ENCODE measurements at regions of chr7 and their contacts with region 1.

Region 1: DNA sequence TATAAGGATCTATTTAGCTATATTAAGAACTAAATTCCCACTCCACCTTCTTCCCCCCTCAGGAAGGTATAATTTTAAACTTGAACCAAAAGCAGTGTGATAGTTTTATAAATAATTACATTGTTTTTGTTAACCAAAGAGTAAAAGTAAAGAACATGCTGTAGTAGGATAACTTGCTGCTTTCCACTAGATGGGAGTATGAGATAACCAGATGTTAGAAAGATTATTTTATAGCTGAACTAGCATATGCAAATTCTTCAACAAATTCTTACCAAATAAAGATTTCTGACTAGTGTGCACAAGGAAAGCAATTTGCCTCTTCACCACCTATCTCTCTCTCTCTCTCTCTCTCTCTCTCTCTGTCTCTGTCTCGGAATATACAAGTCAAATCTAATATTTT is 31.8 kb downstream of the TES start:
- DNase-seq: no peak
- H3K4me3 ChIP-seq: no peak overlapping the region
- H3K27ac ChIP-seq: no peak overlapping the region
- H3K27me3 ChIP-seq: no peaks in the 10 kb centered on the region
- CTCF ChIP-seq: peak; percentile 44

Region 2: DNA sequence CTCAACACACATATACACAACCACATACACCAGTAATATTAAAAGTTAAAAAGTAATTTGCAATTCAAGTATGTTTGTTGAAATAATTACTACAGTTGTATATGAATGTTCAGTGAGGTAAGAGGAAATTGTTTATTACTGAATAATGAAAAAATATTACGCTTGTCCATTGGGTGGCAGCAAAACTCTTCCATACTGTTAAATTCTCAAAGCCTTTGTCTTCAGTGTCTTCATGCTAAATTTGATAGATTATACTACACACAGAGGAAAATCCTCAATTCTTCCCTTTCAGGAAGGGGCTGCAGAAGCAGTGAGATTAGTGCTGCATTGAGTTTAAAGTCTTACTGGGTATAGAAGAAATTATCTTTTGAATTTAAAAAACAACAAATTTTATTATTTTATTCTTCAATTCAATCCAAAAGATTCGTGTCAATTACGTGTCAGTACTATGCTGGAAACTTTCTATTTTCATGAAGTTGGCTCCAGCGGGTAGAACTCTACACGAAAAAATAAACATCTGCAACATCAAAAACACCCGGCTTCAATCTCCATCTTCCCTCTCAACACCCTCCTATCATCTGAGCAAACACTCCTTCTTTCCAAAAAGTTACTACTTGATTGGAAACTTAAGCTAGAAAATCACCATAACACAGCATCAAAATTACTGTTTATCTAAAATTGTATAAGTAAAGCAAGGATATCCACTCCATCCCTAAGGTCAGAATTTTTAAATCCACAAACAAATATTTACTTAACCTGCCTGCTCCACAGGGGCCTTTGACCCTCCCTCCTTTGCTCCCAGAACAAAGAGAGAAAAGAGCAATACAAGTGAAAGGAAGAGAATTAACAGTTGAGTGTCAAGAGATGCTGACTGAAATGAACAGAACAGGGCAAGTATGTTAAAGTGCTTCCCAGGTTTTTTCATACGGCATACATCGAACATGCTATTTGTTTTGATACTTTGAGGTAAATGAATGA is 68.8 kb before region 1 on chr7:
- CTCF ChIA-PET with region 1: interaction called, 362 read pairs
- POLR2A ChIA-PET with region 1: no interaction called
- DNase-seq: peak; percentile 52
- H3K4me3 ChIP-seq: no peak overlapping the region
- H3K27ac ChIP-seq: no peak overlapping the region
- H3K27me3 ChIP-seq: no peaks in the 10 kb centered on the region
- CTCF ChIP-seq: peak; percentile 54

Region 3: GRCh38 chr7:116219288-116219687 is 22.9 kb before region 1 on chr7:
- CTCF ChIA-PET with region 1: no interaction called
- POLR2A ChIA-PET with region 1: no interaction called
- DNase-seq: no peak
- H3K4me3 ChIP-seq: no peak overlapping the region
- H3K27ac ChIP-seq: no peak overlapping the region
- H3K27me3 ChIP-seq: no peaks in the 10 kb centered on the region
- CTCF ChIP-seq: no peak

Region 4: GRCh38 chr7:116582806-116583444 is 340.7 kb after region 1 on chr7:
- CTCF ChIA-PET with region 1: interaction called, 36 read pairs
- POLR2A ChIA-PET with region 1: no interaction called
- DNase-seq: no peak
- H3K4me3 ChIP-seq: no peak overlapping the region
- H3K27ac ChIP-seq: peak overlapping the region; percentile 69
- H3K27me3 ChIP-seq: no peaks in the 10 kb centered on the region
- CTCF ChIP-seq: no peak

Measured in AG04450 (cell line).